K562 (cell line): ENCODE measurements at regions of chr11 and their contacts with region 1.

Region 1: GRCh38 chr11:124174001-124174583 is 9.1 kb upstream of the OR10D3 start:
- DNase-seq: peak; percentile 33 to 85 (median 47)
- ATAC-seq: peak; percentile 54
- H3K4me3 ChIP-seq: no peak overlapping the region
- H3K27ac ChIP-seq: no peak overlapping the region
- H3K4me1 ChIP-seq: peaks cover 5 to 17% of the 10 kb centered on the region in 2 experiments; a peak in 4 of 5 replicates
- H3K27me3 ChIP-seq: no peaks in the 10 kb centered on the region
- CTCF ChIP-seq: no peak
- EP300 ChIP-seq: no peak
- POLR2A ChIP-seq: no peak
- RAD21 ChIP-seq: no peak

Region 2: DNA sequence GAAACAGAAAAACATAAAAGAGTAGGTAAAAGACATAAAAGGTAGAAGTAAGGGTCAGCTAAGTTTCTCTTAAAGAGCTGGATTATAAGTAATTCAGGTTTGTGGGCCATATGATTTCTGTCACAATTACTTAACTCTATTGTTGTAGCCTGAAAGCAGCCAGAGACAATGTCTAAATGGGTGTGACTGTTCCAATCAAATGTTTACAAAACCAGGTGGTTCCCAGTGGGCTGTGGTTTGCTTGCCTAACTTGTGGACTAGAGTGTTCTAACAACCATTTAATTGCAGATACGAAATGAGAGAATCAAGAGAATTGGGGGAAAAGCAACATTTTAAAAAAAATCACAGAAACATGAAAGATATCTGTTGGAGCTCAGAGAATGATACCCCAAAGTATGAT is 390.6 kb before region 1 on chr11:
- CTCF ChIA-PET with region 1: no interaction called
- POLR2A ChIA-PET with region 1: no interaction called
- in situ Hi-C with region 1: no loop called
- intact Hi-C with region 1: no loop called
- DNase-seq: no peak
- ATAC-seq: no peak
- H3K4me3 ChIP-seq: no peak overlapping the region
- H3K27ac ChIP-seq: no peak overlapping the region
- H3K4me1 ChIP-seq: no peaks in the 10 kb centered on the region
- H3K27me3 ChIP-seq: no peaks in the 10 kb centered on the region
- CTCF ChIP-seq: no peak
- EP300 ChIP-seq: no peak
- POLR2A ChIP-seq: no peak
- RAD21 ChIP-seq: no peak

Region 3: DNA sequence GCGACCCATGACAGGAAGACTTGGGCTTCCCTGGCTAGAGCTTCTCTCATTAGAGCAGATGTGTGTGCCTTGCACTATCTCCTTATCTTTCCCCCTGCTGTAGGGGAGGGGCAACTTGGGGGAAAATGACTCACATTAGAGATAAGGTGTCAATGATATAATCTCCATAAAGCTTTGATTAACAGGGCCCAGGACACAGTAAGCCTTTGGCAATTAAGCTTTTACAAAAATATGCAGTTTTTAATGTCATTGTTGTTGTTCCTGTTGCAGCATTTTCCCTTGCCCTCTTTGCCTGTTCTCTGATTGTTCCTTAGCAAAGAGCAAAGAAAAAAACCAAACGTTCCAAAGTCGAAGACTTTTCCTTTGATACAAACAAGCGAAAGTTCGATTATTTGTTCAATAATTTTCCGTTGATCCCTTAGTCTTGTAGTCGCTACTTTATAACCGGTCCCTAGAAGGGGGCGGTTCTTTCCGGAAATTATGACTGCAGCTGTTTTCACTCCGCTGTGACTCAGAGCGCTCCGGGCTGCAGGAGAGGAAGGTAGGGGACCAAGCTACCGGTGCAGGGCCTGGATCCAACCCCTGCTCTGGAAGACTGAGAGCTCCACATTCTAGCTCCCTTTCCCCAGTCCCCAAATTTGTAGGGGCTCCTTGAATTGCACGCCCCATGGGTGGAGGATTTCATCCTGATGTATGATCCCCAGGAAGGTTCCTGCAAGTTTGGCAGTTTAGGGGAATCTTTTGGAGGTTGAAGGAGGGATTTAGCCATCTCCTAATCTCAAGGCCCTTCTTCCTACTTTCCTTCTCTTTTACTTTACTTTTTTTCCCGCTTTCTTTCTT is 58.9 kb before region 1 on chr11 and contains the start of gene VWA5A:
- CTCF ChIA-PET with region 1: no interaction called
- POLR2A ChIA-PET with region 1: interaction called, 7 read pairs
- in situ Hi-C with region 1: no loop called
- intact Hi-C with region 1: loop called (anchors 2 kb)
- DNase-seq: peak; percentile 69 to 91 (median 78)
- ATAC-seq: peak; percentile 99
- H3K4me3 ChIP-seq: peak within 1 kb of the TSS; percentile 37
- H3K27ac ChIP-seq: peak within 1 kb of the TSS; percentile 31
- H3K4me1 ChIP-seq: peaks cover 5 to 6% of the 10 kb centered on the region in 2 experiments; a peak in 4 of 5 replicates
- H3K27me3 ChIP-seq: no peaks in the 10 kb centered on the region
- CTCF ChIP-seq: no peak
- EP300 ChIP-seq: peak; percentile 20
- POLR2A ChIP-seq: peak; percentile 76
- RAD21 ChIP-seq: no peak
- polyA plus RNA-seq, gene VWA5A: 9.3 to 19.7 TPM